CD14-positive monocyte (primary cell): ENCODE measurements at regions of chr16 and their contacts with region 1.

Region 1: GRCh38 chr16:21952793-21953540 is at the start of gene UQCRC2:
- DNase-seq: peak; percentile 87 to 91 (median 91)
- H3K4me3 ChIP-seq: peak within 1 kb of the TSS; percentile 89 to 91 (median 89)
- H3K4me3 Mint-ChIP-seq: peak within 1 kb of the TSS; percentile 95 to 99
- H3K27ac ChIP-seq: peak within 1 kb of the TSS; percentile 88 to 99
- H3K27ac Mint-ChIP-seq: peak within 1 kb of the TSS; percentile 98 to 100 (median 99)
- H3K4me1 ChIP-seq: peaks cover 22 to 37% of the 10 kb centered on the region in 2 donors
- H3K4me1 Mint-ChIP-seq: peaks cover 32% of the 10 kb centered on the region
- H3K27me3 ChIP-seq: no peaks in the 10 kb centered on the region
- H3K27me3 Mint-ChIP-seq: no peaks in the 10 kb centered on the region
- CTCF ChIP-seq: no peak
- polyA plus RNA-seq, gene UQCRC2: 101 to 195 (median 189) TPM

Region 2: GRCh38 chr16:21656795-21657768 is 295.9 kb before region 1 on chr16:
- intact Hi-C with region 1: loop called in 1 of 2 experiments (anchors 5 kb)
- DNase-seq: peak; percentile 50 to 69 (median 64)
- H3K4me3 ChIP-seq: peak overlapping the region in 2 of 3 experiments; percentile 22 to 55
- H3K4me3 Mint-ChIP-seq: peak overlapping the region; percentile 47 to 69
- H3K27ac ChIP-seq: peak overlapping the region; percentile 36 to 77
- H3K27ac Mint-ChIP-seq: peak overlapping the region; percentile 87 to 97 (median 94)
- H3K4me1 ChIP-seq: peaks cover 71 to 75% of the 10 kb centered on the region in 2 donors
- H3K4me1 Mint-ChIP-seq: peaks cover 78% of the 10 kb centered on the region
- H3K27me3 ChIP-seq: no peaks in the 10 kb centered on the region
- H3K27me3 Mint-ChIP-seq: peaks cover 0 to 5% (median under 1%) of the 10 kb centered on the region in 3 donors
- CTCF ChIP-seq: peak; percentile 94

Region 3: DNA sequence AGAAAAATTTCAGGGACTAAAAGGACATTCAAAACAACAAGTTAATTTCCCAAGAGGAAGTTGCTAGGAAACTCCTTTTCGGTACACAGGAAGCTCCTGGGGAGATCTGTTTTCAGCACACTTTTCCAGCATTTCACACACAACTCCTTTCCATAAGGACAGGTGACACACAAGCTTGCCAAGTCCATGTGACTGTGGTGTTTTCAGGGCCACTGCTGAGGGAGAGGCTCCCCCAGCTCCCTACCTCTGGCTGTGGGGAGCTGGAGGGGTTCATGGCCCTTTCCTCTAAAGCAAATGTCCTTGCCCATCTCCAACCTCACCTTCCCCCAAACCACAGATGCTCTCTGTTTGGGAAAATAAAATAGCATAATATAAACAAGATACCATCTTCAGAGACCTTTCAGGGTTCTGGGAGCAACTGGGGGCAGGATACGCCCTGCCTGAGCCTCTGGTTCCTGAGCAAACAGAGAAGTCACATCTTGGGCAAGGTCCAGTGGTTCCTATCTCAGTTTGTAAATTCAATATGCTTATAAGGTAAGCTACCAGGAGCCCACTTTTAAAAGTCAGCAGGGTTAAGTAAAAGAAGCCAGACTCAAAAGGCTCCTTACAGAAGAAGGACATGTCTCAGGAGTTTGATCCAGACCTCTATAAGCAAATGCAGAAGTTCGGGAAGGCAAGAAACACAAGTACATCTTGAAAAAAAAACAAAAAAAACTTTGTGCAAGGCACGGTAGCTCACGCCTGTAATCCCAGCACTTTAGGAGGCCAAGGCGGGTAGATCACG is 44.9 kb after region 1 on chr16:
- intact Hi-C with region 1: no loop called
- DNase-seq: no peak
- H3K4me3 ChIP-seq: no peak overlapping the region
- H3K4me3 Mint-ChIP-seq: no peak overlapping the region
- H3K27ac ChIP-seq: no peak overlapping the region
- H3K27ac Mint-ChIP-seq: no peak overlapping the region
- H3K4me1 ChIP-seq: peaks cover 5 to 8% of the 10 kb centered on the region in 2 donors
- H3K4me1 Mint-ChIP-seq: peaks cover 18% of the 10 kb centered on the region
- H3K27me3 ChIP-seq: no peaks in the 10 kb centered on the region
- H3K27me3 Mint-ChIP-seq: peaks cover 0 to 5% (median 0%) of the 10 kb centered on the region in 3 donors
- CTCF ChIP-seq: no peak